ENCODE measurements at regions of chr2 and their contacts with region 1.

Region 1: DNA sequence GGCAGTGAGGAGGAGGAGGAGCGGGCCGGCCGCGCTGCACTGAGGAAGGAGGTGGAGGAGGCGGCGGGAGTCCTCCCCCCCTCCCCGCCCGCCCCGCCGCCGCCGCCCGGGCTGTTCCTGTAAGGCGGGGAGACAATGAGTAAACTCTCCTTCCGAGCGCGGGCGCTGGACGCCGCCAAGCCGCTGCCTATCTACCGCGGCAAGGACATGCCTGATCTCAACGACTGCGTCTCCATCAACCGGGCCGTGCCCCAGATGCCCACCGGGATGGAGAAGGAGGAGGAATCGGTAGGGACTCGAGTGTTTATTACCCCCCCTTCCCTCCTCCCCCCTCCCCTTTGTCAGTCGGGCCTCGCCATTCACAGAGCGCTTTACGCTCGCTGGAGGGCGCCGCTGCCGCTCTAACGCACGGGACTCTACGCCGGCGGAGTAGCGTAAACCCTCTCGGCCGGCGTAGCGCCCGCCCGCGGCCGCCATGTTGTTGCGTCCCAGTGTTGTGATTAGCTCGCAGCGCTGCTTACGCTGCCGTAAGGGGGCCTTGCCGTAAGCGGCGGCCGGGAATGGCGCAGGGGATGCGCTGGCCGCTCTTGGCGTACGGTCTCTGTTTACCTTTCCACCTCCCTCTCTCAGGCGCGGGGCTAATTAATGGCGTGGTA is 460 bp downstream of the EPC2 start:
- DNase-seq: peak; percentile 90
- H3K4me3 Mint-ChIP-seq: peak overlapping the region; percentile 91
- H3K27ac Mint-ChIP-seq: peak overlapping the region; percentile 99
- H3K4me1 Mint-ChIP-seq: peaks cover 27% of the 10 kb centered on the region
- H3K27me3 Mint-ChIP-seq: no peaks in the 10 kb centered on the region
- CTCF ChIP-seq: peak; percentile 13

Region 2: GRCh38 chr2:147460155-147460554 is 1184.9 kb before region 1 on chr2:
- CTCF ChIA-PET with region 1: no interaction called
- POLR2A ChIA-PET with region 1: no interaction called
- intact Hi-C with region 1: no loop called
- DNase-seq: peak; percentile 77
- H3K4me3 Mint-ChIP-seq: no peak overlapping the region
- H3K27ac Mint-ChIP-seq: peak overlapping the region; percentile 2
- H3K4me1 Mint-ChIP-seq: no peaks in the 10 kb centered on the region
- H3K27me3 Mint-ChIP-seq: no peaks in the 10 kb centered on the region
- CTCF ChIP-seq: no peak

Region 3: DNA sequence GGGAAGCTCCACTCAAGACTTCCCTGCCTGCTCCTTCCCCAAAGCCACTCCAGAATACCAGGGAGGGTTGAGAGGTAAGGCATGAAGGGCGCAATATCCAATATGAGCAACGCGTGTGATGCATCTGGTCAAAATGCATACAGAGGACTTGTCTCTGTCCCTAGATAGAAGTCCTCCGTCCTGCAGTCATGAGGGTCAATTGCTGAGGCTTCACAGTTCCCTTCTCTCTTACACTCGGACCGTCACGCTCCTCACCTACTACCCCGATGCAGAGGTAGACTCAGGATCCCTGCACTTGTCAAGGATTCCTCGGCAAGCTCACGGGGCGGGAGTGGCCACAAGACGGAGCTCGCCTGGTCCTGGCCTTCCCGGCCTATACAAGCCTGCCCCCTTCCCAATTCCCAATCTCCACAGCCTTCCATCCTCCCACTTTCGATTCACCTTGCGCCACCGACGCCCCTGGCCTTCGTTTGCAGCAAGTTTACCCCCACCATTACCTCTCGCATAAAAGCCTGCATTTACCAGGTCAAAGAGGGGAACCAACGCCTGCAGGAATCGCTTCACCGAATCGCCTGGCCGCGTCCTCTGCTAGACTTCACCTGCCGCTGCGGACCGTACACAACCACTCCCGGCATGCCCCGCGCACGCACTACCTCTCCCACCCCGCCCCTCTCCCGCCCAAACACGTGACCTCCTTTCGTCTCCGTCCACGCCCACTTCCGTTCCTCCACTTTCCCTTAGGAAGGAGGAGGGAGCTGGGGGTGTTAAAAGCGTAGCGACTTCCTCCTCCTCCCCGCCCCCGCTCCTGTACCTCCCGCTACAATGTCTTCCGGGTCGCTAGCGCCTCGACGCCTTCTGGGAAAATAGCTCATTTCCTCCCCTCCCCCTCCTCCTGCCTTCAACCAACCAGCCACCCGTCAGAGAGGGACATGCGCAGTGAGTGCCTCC is 624.6 kb before region 1 on chr2 and contains the start of gene ORC4:
- CTCF ChIA-PET with region 1: interaction called, 3 read pairs
- POLR2A ChIA-PET with region 1: interaction called, 19 read pairs
- intact Hi-C with region 1: loop called (anchors 10 kb)
- DNase-seq: peak; percentile 100
- H3K4me3 Mint-ChIP-seq: peak within 1 kb of the TSS; percentile 90
- H3K27ac Mint-ChIP-seq: peak within 1 kb of the TSS; percentile 74
- H3K4me1 Mint-ChIP-seq: peaks cover 38% of the 10 kb centered on the region
- H3K27me3 Mint-ChIP-seq: no peaks in the 10 kb centered on the region
- CTCF ChIP-seq: peak; percentile 34
- total RNA-seq, gene ORC4: 38.0 and 53.3 TPM in 2 replicates

Region 4: GRCh38 chr2:148660999-148661398 is 16.0 kb after region 1 on chr2:
- CTCF ChIA-PET with region 1: interaction called, 8 read pairs
- POLR2A ChIA-PET with region 1: interaction called, 11 read pairs
- intact Hi-C with region 1: no loop called
- DNase-seq: no peak
- H3K4me3 Mint-ChIP-seq: no peak overlapping the region
- H3K27ac Mint-ChIP-seq: no peak overlapping the region
- H3K4me1 Mint-ChIP-seq: peaks cover 38% of the 10 kb centered on the region
- H3K27me3 Mint-ChIP-seq: no peaks in the 10 kb centered on the region
- CTCF ChIP-seq: no peak

Region 5: DNA sequence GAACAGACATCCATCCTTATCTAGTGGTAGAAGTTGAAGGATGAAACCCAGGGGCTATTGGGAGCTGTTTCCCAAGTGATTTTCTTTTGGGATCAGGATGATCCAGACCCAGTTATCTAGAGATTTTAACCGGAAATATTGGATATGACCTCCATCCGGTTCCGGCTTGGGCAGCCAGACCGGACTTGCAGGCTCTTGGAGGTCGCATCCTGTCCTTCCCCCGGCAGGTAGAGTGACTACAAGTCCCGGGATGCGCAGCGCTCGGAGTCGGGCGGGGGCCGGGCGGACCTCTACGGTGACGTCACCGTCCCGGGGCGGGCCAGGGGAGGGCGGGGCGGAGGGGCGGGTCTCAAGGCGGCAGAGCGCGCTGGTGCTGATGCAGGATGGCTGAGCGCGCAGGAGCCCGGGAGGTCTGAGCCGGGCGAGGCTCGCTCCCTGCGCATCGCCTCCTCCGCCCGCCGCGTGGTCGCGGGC is 229.9 kb after region 1 on chr2 and contains the start of gene KIF5C:
- CTCF ChIA-PET with region 1: interaction called, 4 read pairs
- POLR2A ChIA-PET with region 1: no interaction called
- intact Hi-C with region 1: loop called (anchors 5 kb)
- DNase-seq: peak; percentile 73
- H3K4me3 Mint-ChIP-seq: peak within 1 kb of the TSS; percentile 47
- H3K27ac Mint-ChIP-seq: no peak within 1 kb of the TSS
- H3K4me1 Mint-ChIP-seq: no peaks in the 10 kb centered on the region
- H3K27me3 Mint-ChIP-seq: peaks cover 30% of the 10 kb centered on the region
- CTCF ChIP-seq: no peak
- total RNA-seq, gene KIF5C: 0.10 and 0.21 TPM in 2 replicates

Region 6: DNA sequence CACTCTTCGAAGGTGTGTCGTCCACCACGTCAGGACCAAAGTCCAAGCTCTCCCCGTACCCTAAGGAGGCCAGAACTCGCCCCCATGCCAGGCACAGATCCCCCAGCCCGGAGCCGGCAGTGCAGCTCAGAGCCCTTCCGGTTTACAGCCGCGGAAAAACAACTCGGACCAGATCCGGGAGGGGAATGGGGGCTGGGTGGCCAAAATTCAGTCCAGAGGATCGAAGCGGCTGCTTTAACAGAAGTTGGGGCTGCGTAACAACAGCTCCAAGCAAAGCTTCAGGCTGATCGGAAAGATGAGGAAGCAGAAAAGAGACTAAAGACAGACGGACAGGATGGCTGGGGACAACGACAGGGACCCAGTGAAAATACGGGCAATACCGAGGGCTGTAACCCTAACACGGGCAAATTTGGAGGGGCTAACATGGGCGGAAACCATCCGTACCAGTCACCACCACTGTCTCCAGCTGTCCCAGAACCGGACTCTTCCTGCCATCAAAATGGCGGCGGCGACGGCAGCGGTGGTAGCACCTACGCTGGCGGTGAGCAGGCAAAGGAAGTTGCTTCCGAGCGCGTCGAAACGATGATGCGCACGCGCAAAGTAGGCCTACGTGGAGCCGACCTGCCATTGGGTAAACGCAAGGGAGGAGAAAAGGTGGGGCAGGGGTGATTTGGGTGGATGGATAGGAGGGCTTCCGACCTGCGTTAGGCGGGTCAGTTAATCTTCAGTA is 942.4 kb after region 1 on chr2 and contains the start of gene MMADHC:
- CTCF ChIA-PET with region 1: no interaction called
- POLR2A ChIA-PET with region 1: interaction called, 3 read pairs
- intact Hi-C with region 1: loop called (anchors 10 kb)
- DNase-seq: peak; percentile 95
- H3K4me3 Mint-ChIP-seq: peak within 1 kb of the TSS; percentile 93
- H3K27ac Mint-ChIP-seq: peak within 1 kb of the TSS; percentile 99
- H3K4me1 Mint-ChIP-seq: peaks cover 21% of the 10 kb centered on the region
- H3K27me3 Mint-ChIP-seq: no peaks in the 10 kb centered on the region
- CTCF ChIP-seq: no peak
- total RNA-seq, gene MMADHC: 151 and 156 TPM in 2 replicates

Measured in MCF 10A (cell line).